ENCODE measurements at regions of chr22 and their contacts with region 1.

Region 1: GRCh38 chr22:37686002-37686982 is at the start of gene NOL12:
- DNase-seq: peak; percentile 83 to 90 (median 85)
- ATAC-seq: peak; percentile 79 to 96 (median 92)
- H3K4me3 ChIP-seq: peak within 1 kb of the TSS; percentile 59 to 92 (median 84)
- H3K27ac ChIP-seq: peak within 1 kb of the TSS; percentile 59 to 97 (median 90)
- H3K4me1 ChIP-seq: peaks cover 4 to 28% (median 17%) of the 10 kb centered on the region in 12 donors
- H3K27me3 ChIP-seq: no peaks in the 10 kb centered on the region
- CTCF ChIP-seq: peak in 2 of 12 donors; percentile 7 to 41
- POLR2A ChIP-seq: no peak
- total RNA-seq, gene NOL12: 8.0 to 16.3 (median 13.8) TPM

Region 2: DNA sequence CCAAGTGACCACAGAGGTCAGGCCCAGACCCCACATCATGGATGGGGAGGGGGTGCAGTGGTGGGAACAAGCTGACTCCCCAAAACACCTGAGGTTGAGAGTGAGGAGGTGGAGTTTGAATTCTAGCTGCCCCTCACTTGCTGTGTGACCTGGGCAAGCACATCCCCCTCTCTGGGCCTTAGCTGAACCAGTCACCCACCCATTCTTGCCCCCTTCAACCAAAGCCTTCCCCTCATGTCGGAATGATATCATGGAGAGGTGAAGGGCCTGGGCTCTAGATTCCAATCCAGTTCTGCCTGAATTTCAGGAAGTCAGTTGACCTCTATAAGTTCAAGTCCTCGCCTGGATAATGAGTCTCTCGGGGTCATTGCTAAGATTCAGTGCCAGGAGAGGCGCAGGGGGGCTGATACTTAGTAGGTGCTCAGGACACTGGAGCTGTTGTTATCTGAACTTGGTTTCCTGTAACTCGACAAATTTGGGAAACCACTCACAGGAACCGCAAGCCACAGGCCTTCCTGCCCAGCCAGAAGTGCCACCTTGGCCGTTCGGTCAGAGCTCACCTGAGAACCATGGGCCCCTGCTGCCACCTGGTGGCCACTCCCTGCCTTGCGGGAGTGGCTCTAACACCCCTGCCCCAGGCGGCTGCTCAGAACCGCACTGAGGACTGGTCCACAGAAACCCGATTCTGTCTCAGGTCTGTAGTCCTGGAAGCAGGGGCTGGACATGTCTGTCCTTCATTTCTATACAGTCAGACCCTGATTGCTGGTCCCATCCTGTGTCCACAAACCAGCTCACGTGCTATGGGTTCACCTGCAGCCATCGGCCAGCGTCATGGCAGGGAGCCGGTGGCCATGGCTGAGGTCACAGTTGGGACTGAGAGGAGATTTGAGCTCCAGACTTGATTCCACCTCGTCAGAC is 119.1 kb before region 1 on chr22:
- intact Hi-C with region 1: no loop called
- DNase-seq: peak; percentile 75 to 91 (median 79)
- ATAC-seq: peak; percentile 32 to 67 (median 50)
- H3K4me3 ChIP-seq: no peak overlapping the region
- H3K27ac ChIP-seq: peak overlapping the region in 10 of 12 donors; percentile 43 to 100 (median 64)
- H3K4me1 ChIP-seq: peaks cover 12 to 85% (median 62%) of the 10 kb centered on the region in 12 donors
- H3K27me3 ChIP-seq: peaks cover 0 to 6% (median 0%) of the 10 kb centered on the region in 9 donors
- CTCF ChIP-seq: peak; percentile 89 to 97 (median 92)
- POLR2A ChIP-seq: no peak

Region 3: DNA sequence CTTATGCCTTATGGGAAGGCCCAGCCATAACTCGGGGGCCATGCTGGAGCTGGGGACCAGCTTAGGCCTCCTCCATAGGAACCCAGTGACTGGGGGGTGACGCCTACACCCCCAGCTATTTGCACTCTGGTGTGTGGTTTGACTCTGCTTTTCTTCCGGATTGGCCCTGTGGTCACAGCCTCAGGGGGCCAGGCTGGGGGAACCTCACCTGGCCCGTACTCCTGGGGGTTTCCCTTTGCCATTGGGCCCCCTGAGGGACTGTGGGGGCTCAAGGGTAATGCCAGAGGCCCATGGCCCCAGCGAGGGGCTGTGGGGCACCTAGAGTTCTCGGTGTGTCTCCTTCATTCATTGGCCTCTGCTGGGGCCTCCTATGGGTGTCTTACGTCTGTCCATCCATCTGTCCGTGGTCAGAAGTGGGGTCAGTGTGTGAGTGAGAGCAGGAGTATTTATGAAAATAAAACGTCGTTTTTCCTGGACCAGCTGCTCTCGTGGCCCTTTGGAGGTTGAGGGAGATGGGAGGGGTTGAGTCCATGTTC is 53.1 kb before region 1 on chr22:
- intact Hi-C with region 1: no loop called
- DNase-seq: no peak
- ATAC-seq: peak in 1 of 4 donors; percentile 1
- H3K4me3 ChIP-seq: peak overlapping the region in 6 of 12 donors; percentile 1 to 36 (median 26)
- H3K27ac ChIP-seq: peak overlapping the region; percentile 65 to 98 (median 84)
- H3K4me1 ChIP-seq: peaks cover 2 to 77% (median 26%) of the 10 kb centered on the region in 12 donors
- H3K27me3 ChIP-seq: no peaks in the 10 kb centered on the region
- CTCF ChIP-seq: no peak
- POLR2A ChIP-seq: no peak

Region 4: DNA sequence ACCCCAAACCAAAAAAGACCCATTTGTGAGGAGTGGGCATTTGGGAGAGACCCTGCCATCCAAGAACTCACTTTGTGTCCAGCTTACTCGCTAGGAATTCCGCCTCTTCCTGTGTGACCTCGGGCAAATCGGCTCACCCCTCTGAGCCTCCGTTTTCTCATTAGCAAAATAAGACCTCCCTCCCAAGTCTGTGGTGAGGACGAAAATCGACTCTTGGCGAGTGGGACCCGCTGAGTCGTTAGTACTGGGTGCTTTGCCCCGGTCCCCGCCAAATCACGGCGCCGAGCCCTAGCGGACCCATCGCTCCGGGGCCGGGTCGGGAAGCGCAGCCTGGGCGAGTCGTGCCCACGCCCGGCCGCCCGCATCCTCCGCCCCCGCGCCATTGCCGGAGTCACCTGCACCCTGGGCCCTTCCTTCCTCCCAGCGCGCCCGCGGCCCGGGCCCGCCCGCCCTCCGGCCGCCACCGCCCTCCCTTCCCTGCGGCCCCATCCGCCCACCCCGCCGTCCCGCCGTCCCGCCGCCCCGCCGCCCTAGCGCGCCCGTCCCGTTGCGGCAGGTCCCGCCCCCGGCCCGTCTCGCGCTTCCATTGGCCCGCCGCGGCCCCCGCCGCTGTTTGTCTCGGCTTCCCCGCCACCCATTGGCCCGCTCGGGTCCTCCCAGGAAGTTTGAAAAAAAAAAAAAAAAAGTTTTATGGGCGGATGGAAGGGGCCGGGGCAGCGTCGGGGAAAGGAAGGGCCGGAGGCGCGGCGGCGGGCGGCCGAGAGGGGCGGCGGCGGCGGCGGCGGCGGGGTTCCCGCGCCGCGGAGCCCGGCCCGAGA is 59.5 kb after region 1 on chr22:
- intact Hi-C with region 1: loop called in 4 of 10 experiments (anchors 5 to 10 kb)
- DNase-seq: peak; percentile 94 to 96 (median 95)
- ATAC-seq: peak; percentile 65 to 76 (median 70)
- H3K4me3 ChIP-seq: peak overlapping the region; percentile 82 to 100 (median 97)
- H3K27ac ChIP-seq: peak overlapping the region; percentile 95 to 100 (median 99)
- H3K4me1 ChIP-seq: peaks cover 16 to 76% (median 58%) of the 10 kb centered on the region in 12 donors
- H3K27me3 ChIP-seq: no peaks in the 10 kb centered on the region
- CTCF ChIP-seq: no peak
- POLR2A ChIP-seq: peak in 1 of 2 donors; percentile 45

Region 5: GRCh38 chr22:37802310-37803194 is 116.3 kb after region 1 on chr22:
- intact Hi-C with region 1: loop called in 4 of 10 experiments (anchors 10 kb)
- DNase-seq: peak; percentile 71 to 80 (median 73)
- ATAC-seq: peak in 3 of 4 donors; percentile 16 to 29 (median 26)
- H3K4me3 ChIP-seq: peak overlapping the region; percentile 54 to 83 (median 66)
- H3K27ac ChIP-seq: peak overlapping the region in 7 of 12 donors; percentile 40 to 69 (median 53)
- H3K4me1 ChIP-seq: peaks cover 0 to 43% (median 21%) of the 10 kb centered on the region in 12 donors
- H3K27me3 ChIP-seq: peaks cover 0 to 2% (median 0%) of the 10 kb centered on the region in 9 donors
- CTCF ChIP-seq: no peak
- POLR2A ChIP-seq: no peak

Measured in heart left ventricle (tissue), 16 donors.